Activated T-helper 2 cell treated with anti-CD3 and anti-CD28 coated beads, Interferon-gamma antibody, Interleukin-2, Interleukin-4, amounts not matched to agents 10 μg/mL and 5 μg/mL and 100 μg/mL, durations not matched to agents 14 hours and 24 hours and 36 hours (primary cell): ENCODE measurements at regions of chr17 and their contacts with region 1.

Region 1: DNA sequence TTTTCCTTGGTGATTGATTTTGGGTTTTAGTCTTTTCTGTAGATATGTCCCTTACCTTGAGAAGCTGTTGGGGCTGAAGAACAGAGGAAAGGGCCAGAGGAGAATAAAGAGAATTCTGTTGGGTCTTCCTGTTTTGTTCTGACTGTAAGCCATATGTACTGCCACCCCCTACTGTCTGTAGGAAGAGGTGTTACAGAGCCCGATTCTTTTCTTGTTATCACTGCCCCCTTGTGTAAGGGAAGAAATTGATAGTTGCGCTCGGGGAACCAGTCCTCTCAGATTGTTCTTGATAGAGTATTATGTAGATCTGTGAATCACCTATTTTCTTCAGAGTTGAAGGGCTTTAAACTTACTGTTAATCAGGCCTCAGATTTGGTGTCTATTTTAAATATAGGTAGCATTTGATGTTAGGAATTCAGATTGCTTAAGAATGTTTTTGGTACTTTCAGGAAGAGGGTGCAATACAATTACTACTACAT is 2.4 kb downstream of the TANC2 start:
- DNase-seq: peak; percentile 44
- H3K4me3 Mint-ChIP-seq: peak overlapping the region; percentile 23
- H3K27ac Mint-ChIP-seq: no peak overlapping the region
- H3K4me1 Mint-ChIP-seq: peaks cover 31% of the 10 kb centered on the region
- H3K27me3 Mint-ChIP-seq: peaks cover 57% of the 10 kb centered on the region

Region 2: GRCh38 chr17:62653002-62653825 is 315.3 kb before region 1 on chr17:
- intact Hi-C with region 1: loop called (anchors 1 kb)
- DNase-seq: peak; percentile 52
- H3K4me3 Mint-ChIP-seq: peak overlapping the region; percentile 75
- H3K27ac Mint-ChIP-seq: peak overlapping the region; percentile 42
- H3K4me1 Mint-ChIP-seq: peaks cover 19% of the 10 kb centered on the region
- H3K27me3 Mint-ChIP-seq: peaks cover 62% of the 10 kb centered on the region

Region 3: DNA sequence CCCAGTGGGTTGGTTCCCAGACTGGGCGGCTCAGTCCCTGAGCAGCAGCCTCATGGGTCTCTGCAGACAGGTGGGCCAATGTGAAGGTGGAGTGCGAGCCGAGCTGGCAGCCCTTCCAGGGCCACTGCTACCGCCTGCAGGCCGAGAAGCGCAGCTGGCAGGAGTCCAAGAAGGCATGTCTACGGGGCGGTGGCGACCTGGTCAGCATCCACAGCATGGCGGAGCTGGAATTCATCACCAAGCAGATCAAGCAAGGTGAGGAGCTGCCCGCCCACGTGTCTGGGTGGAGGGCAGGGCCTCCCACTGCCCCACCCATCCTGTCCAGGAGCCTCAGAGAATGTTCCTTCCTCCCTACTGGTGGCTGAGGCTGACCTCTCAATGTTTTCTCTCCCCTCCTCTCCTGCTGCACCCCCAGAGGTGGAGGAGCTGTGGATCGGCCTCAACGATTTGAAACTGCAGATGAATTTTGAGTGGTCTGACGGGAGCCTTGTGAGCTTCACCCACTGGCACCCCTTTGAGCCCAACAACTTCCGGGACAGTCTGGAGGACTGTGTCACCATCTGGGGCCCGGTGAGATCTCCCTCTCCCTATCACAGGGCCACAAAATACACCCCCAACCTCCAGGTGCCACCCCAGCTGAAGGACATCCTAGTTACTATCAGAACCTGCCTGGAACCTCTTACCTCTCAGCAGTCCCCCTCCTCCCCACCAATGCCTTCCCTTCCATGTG is 296.7 kb before region 1 on chr17:
- intact Hi-C with region 1: loop called (anchors 1 kb)
- DNase-seq: no peak
- H3K4me3 Mint-ChIP-seq: no peak overlapping the region
- H3K27ac Mint-ChIP-seq: no peak overlapping the region
- H3K4me1 Mint-ChIP-seq: no peaks in the 10 kb centered on the region
- H3K27me3 Mint-ChIP-seq: no peaks in the 10 kb centered on the region

Region 4: GRCh38 chr17:62703775-62704378 is 264.6 kb before region 1 on chr17:
- intact Hi-C with region 1: loop called (anchors 1 kb)
- DNase-seq: peak; percentile 57
- H3K4me3 Mint-ChIP-seq: peak overlapping the region; percentile 21
- H3K27ac Mint-ChIP-seq: no peak overlapping the region
- H3K4me1 Mint-ChIP-seq: peaks cover 3% of the 10 kb centered on the region
- H3K27me3 Mint-ChIP-seq: peaks cover 52% of the 10 kb centered on the region

Region 5: GRCh38 chr17:62724398-62725146 is 243.9 kb before region 1 on chr17:
- intact Hi-C with region 1: loop called (anchors 1 kb)
- DNase-seq: peak; percentile 64
- H3K4me3 Mint-ChIP-seq: no peak overlapping the region
- H3K27ac Mint-ChIP-seq: peak overlapping the region; percentile 21
- H3K4me1 Mint-ChIP-seq: peaks cover 20% of the 10 kb centered on the region
- H3K27me3 Mint-ChIP-seq: peaks cover 77% of the 10 kb centered on the region

Region 6: GRCh38 chr17:62995377-62995885 is 26.9 kb after region 1 on chr17:
- intact Hi-C with region 1: no loop called
- DNase-seq: no peak
- H3K4me3 Mint-ChIP-seq: no peak overlapping the region
- H3K27ac Mint-ChIP-seq: no peak overlapping the region
- H3K4me1 Mint-ChIP-seq: no peaks in the 10 kb centered on the region
- H3K27me3 Mint-ChIP-seq: peaks cover 2% of the 10 kb centered on the region

Region 7: GRCh38 chr17:63189082-63189481 is 220.6 kb after region 1 on chr17:
- intact Hi-C with region 1: no loop called
- DNase-seq: no peak
- H3K4me3 Mint-ChIP-seq: no peak overlapping the region
- H3K27ac Mint-ChIP-seq: no peak overlapping the region
- H3K4me1 Mint-ChIP-seq: peaks cover 4% of the 10 kb centered on the region
- H3K27me3 Mint-ChIP-seq: no peaks in the 10 kb centered on the region